Motor neuron (in vitro differentiated cells): ENCODE measurements at regions of chr9 and their contacts with region 1.

Region 1: GRCh38 chr9:37592108-37592951 is at the start of gene TOMM5:
- ATAC-seq: peak; percentile 80 to 98 (median 96)
- H3K4me3 ChIP-seq: peak within 1 kb of the TSS; percentile 83 to 99 (median 92)
- H3K27ac ChIP-seq: peak within 1 kb of the TSS; percentile 96 to 99
- H3K4me1 ChIP-seq: peaks cover 7 to 22% of the 10 kb centered on the region in 2 donors
- total RNA-seq, gene TOMM5: 121 to 314 (median 160) TPM

Region 2: GRCh38 chr9:37398464-37399025 is 193.8 kb before region 1 on chr9:
- in situ Hi-C with region 1: no loop called
- ATAC-seq: no peak
- H3K4me3 ChIP-seq: no peak overlapping the region
- H3K27ac ChIP-seq: no peak overlapping the region
- H3K4me1 ChIP-seq: no peaks in the 10 kb centered on the region

Region 3: DNA sequence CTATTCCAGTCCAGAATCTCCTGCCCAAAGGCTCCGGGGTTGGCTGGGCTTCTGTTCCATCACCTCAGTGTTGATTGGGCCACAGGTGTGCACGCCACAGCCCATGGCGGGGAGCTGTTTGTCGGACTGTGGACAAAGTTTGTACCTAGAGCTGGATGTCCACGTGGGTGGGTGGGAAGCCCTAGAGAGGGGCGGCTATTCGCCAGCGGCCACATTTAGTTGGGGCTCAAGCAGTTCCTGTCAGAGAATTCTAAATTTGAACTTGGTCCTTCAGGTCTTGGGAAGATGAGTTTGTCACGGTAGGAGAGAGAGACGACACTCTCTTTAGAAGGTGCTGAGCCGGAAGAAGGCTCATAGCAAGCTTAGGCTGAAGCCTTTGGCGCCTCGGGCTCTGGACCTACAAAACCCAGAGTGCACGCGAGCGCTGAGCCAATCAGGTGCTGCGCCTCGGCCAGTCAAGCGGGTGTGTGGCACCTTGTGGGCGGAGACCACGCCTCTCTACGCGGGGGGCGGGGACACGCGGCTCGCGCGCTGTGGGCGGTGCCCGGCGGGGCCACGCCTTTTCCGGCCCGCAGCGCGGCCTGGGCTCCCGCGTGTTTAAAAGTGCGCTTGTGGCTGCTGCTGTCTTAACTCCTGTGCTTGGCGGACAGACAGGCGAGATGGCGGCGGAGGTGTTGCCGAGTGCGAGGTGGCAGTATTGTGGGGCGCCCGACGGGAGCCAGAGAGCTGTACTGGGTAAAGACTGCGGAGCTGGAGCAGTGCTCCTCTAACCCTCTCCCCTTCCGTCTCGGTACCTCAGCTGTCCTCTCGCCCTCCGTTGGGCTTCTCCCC is 106.7 kb before region 1 on chr9 and contains the start of gene POLR1E:
- in situ Hi-C with region 1: loop called in 2 of 9 experiments (anchors 25 kb)
- ATAC-seq: peak; percentile 85 to 96 (median 94)
- H3K4me3 ChIP-seq: peak within 1 kb of the TSS; percentile 49 to 65 (median 57)
- H3K27ac ChIP-seq: peak within 1 kb of the TSS in 1 of 2 donors; percentile 2
- H3K4me1 ChIP-seq: peaks cover 11 to 13% of the 10 kb centered on the region in 2 donors
- total RNA-seq, gene POLR1E: 19.4 to 35.4 (median 24.9) TPM

Region 4: DNA sequence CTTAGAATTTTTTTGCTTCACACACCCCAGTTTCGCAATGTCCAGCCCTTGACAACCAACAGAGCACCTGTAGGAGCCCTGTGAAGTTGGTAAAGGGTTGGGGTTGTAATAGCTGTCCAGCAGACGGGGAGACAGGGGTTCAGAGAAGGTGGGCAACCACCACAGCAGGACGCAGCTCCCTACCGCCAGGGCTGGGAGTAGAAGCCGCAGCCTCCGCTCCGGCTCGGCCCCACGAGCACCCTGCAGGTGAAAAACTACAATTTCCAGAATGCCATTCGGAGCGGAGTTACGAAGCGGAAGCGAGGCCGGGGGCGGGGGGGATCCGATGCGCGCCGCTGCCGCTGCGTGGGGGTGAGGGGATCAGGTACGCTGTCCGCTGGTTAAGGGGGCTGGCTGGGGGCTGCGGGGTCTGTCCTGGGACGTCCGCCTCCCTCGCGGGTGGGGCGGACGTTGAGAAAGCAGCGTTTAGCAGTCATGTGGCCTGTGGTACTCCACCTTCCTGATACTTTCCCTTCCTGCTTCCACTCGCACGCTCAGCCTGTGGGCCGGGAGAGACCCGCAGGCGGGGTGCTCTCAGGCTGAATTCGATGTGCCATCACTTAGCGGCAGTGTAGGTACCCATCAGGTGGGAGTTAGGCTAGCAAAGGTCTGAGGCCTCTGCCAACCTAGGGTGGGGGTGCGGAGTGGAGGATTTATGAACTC is 161.3 kb after region 1 on chr9 and contains the start of gene TRMT10B:
- in situ Hi-C with region 1: loop called in 1 of 9 experiments (anchors 25 kb)
- ATAC-seq: peak; percentile 93 to 98 (median 95)
- H3K4me3 ChIP-seq: peak within 1 kb of the TSS; percentile 56 to 92 (median 74)
- H3K27ac ChIP-seq: no peak within 1 kb of the TSS
- H3K4me1 ChIP-seq: peaks cover 2 to 4% of the 10 kb centered on the region in 2 donors
- total RNA-seq, gene TRMT10B: 8.2 to 14.0 (median 10.8) TPM

Region 5: GRCh38 chr9:37784616-37785483 is 192.5 kb after region 1 on chr9 and contains the start of gene EXOSC3:
- in situ Hi-C with region 1: loop called in 2 of 9 experiments (anchors 25 kb)
- ATAC-seq: peak; percentile 91 to 98 (median 96)
- H3K4me3 ChIP-seq: peak within 1 kb of the TSS; percentile 79 to 89 (median 82)
- H3K27ac ChIP-seq: peak within 1 kb of the TSS; percentile 76 to 90
- H3K4me1 ChIP-seq: peaks cover 7 to 17% of the 10 kb centered on the region in 2 donors
- total RNA-seq, gene EXOSC3: 24.7 to 57.2 (median 43.2) TPM

Region 6: GRCh38 chr9:38088006-38088925 is 495.9 kb after region 1 on chr9:
- in situ Hi-C with region 1: no loop called
- ATAC-seq: peak; percentile 58 to 90 (median 68)
- H3K4me3 ChIP-seq: no peak overlapping the region
- H3K27ac ChIP-seq: no peak overlapping the region
- H3K4me1 ChIP-seq: peaks cover 16 to 17% of the 10 kb centered on the region in 2 donors